ENCODE measurements at regions of chr17 and their contacts with region 1.

Region 1: DNA sequence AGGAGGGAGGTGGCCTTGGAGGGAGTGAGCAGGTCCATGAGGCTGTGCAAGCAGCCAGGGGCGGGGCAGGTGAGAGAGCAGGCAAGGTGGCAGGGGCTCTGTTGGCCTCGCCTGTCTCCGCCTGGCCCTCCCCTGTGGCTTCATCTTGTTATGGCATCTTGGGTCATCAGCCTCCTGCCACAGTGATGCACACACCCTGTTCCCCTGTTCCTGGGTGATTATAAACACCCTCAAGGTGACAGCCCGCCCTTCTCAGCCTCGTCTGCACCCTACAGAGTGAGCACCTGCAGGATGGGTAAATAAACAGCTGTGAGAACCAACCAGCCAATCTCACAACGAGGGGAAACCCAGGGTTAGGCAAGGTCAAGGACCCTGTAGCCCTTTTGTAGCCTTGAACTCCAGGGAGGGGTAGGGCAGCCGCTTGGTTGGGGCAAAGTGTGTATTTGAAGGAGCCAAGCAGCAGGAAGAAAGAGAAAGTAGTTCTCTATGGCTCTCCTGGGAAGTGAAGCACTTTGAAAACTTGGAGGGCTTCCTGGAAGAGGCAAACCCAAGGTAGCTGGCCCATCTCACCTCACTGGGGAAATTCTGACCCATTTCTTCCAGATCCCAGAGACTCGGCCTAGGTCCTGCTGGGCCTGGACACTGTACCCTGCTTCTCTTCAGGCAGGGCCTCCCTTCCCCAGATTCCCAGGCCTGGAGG is 60.6 kb downstream of the NT5M start:
- DNase-seq: peak in 1 of 5 donors; percentile 54
- ATAC-seq: no peak
- H3K4me3 ChIP-seq: no peak overlapping the region
- H3K27ac ChIP-seq: peak overlapping the region in 10 of 12 donors; percentile 8 to 68 (median 32)
- H3K4me1 ChIP-seq: peaks cover 0 to 18% (median 7%) of the 10 kb centered on the region in 12 donors
- H3K27me3 ChIP-seq: peaks cover 0 to 6% (median 0%) of the 10 kb centered on the region in 9 donors
- CTCF ChIP-seq: no peak
- POLR2A ChIP-seq: no peak

Region 2: GRCh38 chr17:17303010-17303846 is 60.6 kb before region 1 on chr17 and contains the start of gene NT5M:
- intact Hi-C with region 1: loop called in 1 of 10 experiments (anchors 10 kb)
- DNase-seq: peak; percentile 69 to 86 (median 76)
- ATAC-seq: peak; percentile 65 to 88 (median 85)
- H3K4me3 ChIP-seq: peak within 1 kb of the TSS; percentile 28 to 76 (median 60)
- H3K27ac ChIP-seq: peak within 1 kb of the TSS; percentile 21 to 79 (median 60)
- H3K4me1 ChIP-seq: peaks cover 0 to 38% (median 8%) of the 10 kb centered on the region in 12 donors
- H3K27me3 ChIP-seq: no peaks in the 10 kb centered on the region
- CTCF ChIP-seq: peak in 1 of 12 donors; percentile 5
- POLR2A ChIP-seq: no peak
- total RNA-seq, gene NT5M: 5.3 to 15.1 (median 7.6) TPM

Region 3: DNA sequence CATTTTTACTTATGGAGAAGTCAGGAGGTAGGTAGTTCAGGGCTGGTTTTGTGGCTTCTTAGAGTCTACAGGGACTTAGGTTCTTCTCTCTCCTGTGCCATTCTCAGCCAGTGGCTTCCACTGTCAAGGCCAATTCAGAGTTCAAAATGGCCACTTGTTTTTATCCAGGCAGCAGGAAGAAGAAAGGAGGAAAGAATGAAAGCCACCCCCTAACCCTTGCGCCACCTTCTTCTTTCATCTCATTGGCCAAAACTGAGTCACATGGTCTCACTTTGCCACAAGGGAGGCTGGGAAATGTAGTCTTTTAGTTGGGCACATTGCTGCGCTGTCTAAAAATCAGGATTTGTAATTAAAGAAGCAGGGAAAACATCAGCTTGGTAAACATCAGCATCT is 52.2 kb after region 1 on chr17:
- intact Hi-C with region 1: loop called in 3 of 10 experiments (anchors 5 kb)
- DNase-seq: no peak
- ATAC-seq: peak in 2 of 4 donors; percentile 16 to 41
- H3K4me3 ChIP-seq: no peak overlapping the region
- H3K27ac ChIP-seq: peak overlapping the region; percentile 19 to 82 (median 74)
- H3K4me1 ChIP-seq: peaks cover 0 to 63% (median 33%) of the 10 kb centered on the region in 12 donors
- H3K27me3 ChIP-seq: no peaks in the 10 kb centered on the region
- CTCF ChIP-seq: no peak
- POLR2A ChIP-seq: no peak

Measured in heart left ventricle (tissue), 16 donors.